ENCODE measurements at regions of chr2 and their contacts with region 1.

Region 1: DNA sequence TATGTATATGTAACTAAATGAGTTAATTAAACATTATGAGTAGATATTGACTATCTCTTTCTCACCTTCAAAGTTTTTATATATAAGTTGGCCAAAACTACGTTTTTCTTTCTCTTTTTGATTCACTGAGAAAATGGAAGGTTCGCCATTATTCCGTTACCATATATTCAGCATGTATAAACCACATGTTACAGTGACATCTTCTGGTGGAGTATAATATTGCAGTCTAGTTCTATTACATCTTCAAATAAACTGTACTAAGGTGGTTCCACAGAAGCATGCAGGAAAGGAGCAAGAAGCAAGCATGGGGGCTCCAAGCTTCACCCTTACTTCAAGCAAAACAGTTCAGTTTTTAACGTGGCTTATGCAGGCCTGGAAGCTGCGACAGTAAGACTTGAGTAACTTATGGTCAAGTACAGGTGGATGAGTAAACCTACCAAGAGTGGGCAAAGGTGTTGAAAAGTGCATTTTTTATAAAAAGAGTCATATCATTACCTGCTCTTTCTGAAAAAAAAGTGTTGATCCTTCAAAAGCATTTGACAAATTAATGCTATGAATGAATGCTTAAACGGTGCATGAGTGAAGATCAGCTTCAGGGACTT is 129.8 kb upstream of the RAB6C start:
- DNase-seq: no peak
- ATAC-seq: peak; percentile 77
- H3K4me3 ChIP-seq: no peak overlapping the region
- H3K4me1 ChIP-seq: no peaks in the 10 kb centered on the region
- CTCF ChIP-seq: peak; percentile 37

Region 2: GRCh38 chr2:129758784-129759471 is 90.7 kb before region 1 on chr2:
- intact Hi-C with region 1: loop called in 1 of 2 experiments (anchors 10 kb)
- DNase-seq: peak in 1 of 3 donors; percentile 26
- ATAC-seq: peak; percentile 55
- H3K4me3 ChIP-seq: no peak overlapping the region
- H3K4me1 ChIP-seq: no peaks in the 10 kb centered on the region
- CTCF ChIP-seq: no peak

Region 3: DNA sequence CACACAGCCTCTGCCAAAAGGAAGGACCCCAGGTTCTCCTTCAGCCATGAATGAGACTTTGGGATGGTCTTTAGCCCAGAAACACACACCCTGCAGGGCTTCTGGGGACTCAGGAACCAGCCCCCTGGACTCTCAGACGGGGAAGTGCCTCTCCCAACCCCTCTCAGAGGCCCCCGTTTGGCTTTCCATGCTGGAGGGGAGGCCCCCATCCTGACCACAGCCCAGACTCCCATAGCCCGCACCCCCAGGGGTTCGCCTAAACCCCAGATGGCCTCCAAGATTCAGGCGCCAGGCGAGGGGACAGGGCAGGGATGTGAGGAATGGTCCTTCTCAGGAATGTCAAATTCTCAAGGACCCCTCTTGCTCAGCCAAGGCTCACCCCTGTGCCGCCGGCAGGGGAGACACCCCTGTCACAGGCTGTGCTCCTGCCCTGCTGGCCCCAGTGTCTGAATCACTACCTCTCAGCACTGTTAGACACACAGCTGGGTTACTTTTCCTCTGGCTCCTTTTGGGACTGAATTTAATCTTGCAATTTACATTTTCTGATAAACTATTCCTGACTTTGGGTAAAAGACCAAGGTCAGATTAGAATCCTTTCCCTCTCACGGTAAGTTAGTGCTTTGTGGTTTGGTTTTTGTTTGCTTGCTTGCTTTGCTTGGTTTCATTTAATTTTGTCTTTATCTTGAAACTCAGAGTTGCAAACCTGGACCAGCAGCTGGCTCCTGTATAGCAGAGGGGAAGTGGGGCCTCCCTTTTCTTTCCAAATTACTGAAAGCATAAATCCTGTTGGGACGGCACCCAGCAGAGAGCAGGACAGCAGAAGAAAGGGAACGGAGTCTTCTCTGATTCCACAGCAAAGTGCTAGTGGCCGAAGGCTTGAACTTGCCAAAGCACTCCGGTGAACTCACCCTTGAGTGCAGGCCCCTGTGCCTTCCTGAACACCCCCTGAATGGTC is 69.1 kb before region 1 on chr2:
- intact Hi-C with region 1: no loop called
- DNase-seq: no peak
- ATAC-seq: no peak
- H3K4me3 ChIP-seq: no peak overlapping the region
- H3K4me1 ChIP-seq: no peaks in the 10 kb centered on the region
- CTCF ChIP-seq: no peak